ENCODE measurements at regions of chr2 and their contacts with region 1.

Region 1: DNA sequence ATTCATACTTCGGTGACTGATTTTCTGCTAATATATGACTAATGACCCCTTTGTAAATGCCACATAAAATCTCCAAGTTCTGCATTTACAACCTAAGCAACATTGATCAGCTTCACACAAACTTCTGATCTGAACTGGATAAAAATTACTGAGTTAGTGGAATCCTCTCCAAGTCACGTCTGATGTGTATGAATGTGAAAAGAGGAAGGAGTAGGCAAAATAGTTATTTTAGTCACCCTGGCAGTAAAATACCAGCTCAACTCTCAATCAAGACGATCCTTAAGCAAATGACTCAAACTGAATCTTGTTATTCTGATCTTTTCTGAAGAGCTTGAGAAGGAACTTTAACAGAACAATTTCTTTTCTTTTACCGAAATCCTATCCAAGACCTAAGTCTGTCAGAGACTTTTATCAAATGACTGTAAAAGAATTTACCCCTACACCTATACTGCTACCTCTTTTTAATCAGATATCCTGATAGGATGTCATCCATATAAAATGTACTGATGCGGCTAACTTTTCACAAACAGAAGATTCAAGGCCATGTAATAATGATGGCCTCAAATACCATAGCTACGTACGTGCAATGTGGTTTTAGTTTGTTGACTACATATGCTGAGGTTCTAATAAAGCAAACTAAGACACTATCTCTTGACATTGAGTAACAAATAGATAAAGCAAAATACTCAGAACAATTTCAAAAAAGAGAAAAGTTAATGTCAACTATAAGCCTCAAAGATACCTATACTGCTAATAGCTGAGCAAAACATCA is 23.7 kb downstream of the CUL3 start:
- DNase-seq: no peak
- H3K4me3 Mint-ChIP-seq: peak overlapping the region; percentile 17
- H3K27ac Mint-ChIP-seq: no peak overlapping the region
- H3K4me1 Mint-ChIP-seq: peaks cover 50% of the 10 kb centered on the region
- H3K27me3 Mint-ChIP-seq: no peaks in the 10 kb centered on the region

Region 2: GRCh38 chr2:224520064-224520463 is 41.4 kb before region 1 on chr2:
- CTCF ChIA-PET with region 1: interaction called, 3 read pairs
- POLR2A ChIA-PET with region 1: interaction called, 4 read pairs
- intact Hi-C with region 1: loop called (anchors 2 kb)
- DNase-seq: peak; percentile 71
- H3K4me3 Mint-ChIP-seq: no peak overlapping the region
- H3K27ac Mint-ChIP-seq: peak overlapping the region; percentile 9
- H3K4me1 Mint-ChIP-seq: peaks cover 53% of the 10 kb centered on the region
- H3K27me3 Mint-ChIP-seq: no peaks in the 10 kb centered on the region

Region 3: DNA sequence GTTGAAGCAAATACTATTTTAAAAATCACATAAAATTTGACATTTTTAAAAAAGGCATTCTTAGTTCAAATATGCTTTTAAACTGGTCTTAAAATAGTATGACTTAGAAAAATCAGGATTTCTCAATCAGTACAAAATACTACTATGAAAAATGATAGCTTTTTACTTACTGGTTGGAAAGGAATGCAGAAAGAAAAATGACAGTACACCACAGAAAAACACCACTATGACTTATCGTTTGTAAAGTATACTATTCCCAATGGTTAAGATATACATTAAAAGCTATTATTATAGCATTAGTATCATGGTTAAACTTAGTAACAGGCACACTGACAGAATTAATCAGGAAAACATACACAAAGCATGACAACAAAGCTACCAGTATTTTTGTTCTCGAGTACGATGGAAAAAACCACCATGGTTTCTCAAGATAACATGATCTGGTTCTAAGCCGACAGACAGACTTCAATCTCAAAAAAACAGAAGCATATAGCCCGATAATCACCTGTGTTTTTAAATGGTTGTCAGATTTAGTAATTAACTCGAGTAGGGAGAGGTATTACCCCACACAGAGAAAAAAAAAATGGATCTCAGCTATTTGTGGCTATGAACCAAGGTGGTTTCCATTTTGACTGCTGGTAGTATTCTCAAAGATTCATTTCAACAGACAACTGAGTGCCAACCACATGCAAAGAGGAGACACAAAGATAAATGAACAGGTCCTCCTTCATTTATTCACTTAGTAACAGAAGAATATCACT is 15.4 kb before region 1 on chr2:
- CTCF ChIA-PET with region 1: no interaction called
- POLR2A ChIA-PET with region 1: interaction called, 3 read pairs
- intact Hi-C with region 1: loop called (anchors 2 kb)
- DNase-seq: no peak
- H3K4me3 Mint-ChIP-seq: no peak overlapping the region
- H3K27ac Mint-ChIP-seq: no peak overlapping the region
- H3K4me1 Mint-ChIP-seq: peaks cover 47% of the 10 kb centered on the region
- H3K27me3 Mint-ChIP-seq: no peaks in the 10 kb centered on the region

Region 4: DNA sequence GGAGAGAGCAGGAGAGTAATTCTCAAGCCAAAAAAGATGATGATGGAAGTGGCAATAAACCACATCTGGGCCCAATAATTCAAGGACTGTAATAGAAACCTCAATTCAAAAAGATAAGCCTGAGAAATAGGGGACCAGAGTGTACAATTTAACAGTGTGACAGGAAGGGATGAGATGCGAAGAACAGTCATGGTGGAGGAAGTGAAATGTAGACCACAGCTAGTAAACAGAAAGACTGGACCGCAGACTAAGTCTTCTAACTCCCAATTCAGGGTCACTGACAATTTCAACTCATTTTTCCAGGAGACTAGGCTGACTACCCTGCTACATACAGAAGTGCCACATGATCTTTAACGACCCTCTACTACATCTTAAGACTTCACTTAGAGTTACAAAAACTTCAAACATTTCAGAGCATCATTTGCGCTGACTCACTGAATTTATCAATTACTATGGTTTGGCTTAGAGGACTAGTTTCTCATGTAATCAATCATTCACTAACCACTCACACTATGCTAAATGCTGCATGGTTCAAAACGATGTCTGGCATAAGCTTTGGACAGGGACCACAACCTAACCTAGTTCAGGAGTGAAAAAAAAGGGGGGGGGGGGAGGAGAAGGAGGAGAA is 14.8 kb after region 1 on chr2:
- CTCF ChIA-PET with region 1: interaction called, 3 read pairs
- POLR2A ChIA-PET with region 1: interaction called, 14 read pairs
- intact Hi-C with region 1: loop called (anchors 2 kb)
- DNase-seq: no peak
- H3K4me3 Mint-ChIP-seq: no peak overlapping the region
- H3K27ac Mint-ChIP-seq: peak overlapping the region; percentile 42
- H3K4me1 Mint-ChIP-seq: peaks cover 91% of the 10 kb centered on the region
- H3K27me3 Mint-ChIP-seq: no peaks in the 10 kb centered on the region

Region 5: DNA sequence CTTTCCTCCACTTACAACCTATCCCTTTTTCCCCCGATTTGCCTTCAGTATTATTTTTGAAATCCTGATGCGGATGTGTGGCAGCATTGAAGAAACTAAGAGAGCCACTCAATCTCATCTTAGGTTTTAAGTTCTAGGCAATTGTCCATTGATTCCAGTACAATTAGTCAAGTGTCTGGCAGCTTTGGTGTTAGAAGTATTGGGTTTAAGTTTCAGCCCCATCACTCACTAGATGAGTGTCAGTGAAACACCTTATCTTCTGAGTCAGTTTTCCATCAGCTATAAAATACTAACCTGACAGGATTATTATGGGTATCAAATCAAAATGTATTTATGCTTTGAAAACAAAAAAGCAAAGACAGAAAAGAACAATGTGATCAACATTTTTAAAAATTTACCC is 40.5 kb after region 1 on chr2:
- CTCF ChIA-PET with region 1: no interaction called
- POLR2A ChIA-PET with region 1: no interaction called
- intact Hi-C with region 1: loop called (anchors 2 kb)
- DNase-seq: no peak
- H3K4me3 Mint-ChIP-seq: no peak overlapping the region
- H3K27ac Mint-ChIP-seq: no peak overlapping the region
- H3K4me1 Mint-ChIP-seq: peaks cover 15% of the 10 kb centered on the region
- H3K27me3 Mint-ChIP-seq: peaks cover 11% of the 10 kb centered on the region

Region 6: GRCh38 chr2:224638301-224638823 is 76.9 kb after region 1 on chr2:
- CTCF ChIA-PET with region 1: no interaction called
- POLR2A ChIA-PET with region 1: no interaction called
- intact Hi-C with region 1: loop called (anchors 2 kb)
- DNase-seq: peak; percentile 66
- H3K4me3 Mint-ChIP-seq: peak overlapping the region; percentile 30
- H3K27ac Mint-ChIP-seq: peak overlapping the region; percentile 89
- H3K4me1 Mint-ChIP-seq: peaks cover 10% of the 10 kb centered on the region
- H3K27me3 Mint-ChIP-seq: peaks cover 2% of the 10 kb centered on the region

Measured in activated CD4-positive, alpha-beta memory T cell treated with anti-CD3 and anti-CD28 coated beads for 36 hours (primary cell).